Activated CD4-positive, alpha-beta T cell treated with anti-CD3 and anti-CD28 coated beads, Interleukin-2, amount 10 ng/mL, durations not matched to agents 24 days and 14 days (primary cell): ENCODE measurements at regions of chr18 and their contacts with region 1.

Region 1: DNA sequence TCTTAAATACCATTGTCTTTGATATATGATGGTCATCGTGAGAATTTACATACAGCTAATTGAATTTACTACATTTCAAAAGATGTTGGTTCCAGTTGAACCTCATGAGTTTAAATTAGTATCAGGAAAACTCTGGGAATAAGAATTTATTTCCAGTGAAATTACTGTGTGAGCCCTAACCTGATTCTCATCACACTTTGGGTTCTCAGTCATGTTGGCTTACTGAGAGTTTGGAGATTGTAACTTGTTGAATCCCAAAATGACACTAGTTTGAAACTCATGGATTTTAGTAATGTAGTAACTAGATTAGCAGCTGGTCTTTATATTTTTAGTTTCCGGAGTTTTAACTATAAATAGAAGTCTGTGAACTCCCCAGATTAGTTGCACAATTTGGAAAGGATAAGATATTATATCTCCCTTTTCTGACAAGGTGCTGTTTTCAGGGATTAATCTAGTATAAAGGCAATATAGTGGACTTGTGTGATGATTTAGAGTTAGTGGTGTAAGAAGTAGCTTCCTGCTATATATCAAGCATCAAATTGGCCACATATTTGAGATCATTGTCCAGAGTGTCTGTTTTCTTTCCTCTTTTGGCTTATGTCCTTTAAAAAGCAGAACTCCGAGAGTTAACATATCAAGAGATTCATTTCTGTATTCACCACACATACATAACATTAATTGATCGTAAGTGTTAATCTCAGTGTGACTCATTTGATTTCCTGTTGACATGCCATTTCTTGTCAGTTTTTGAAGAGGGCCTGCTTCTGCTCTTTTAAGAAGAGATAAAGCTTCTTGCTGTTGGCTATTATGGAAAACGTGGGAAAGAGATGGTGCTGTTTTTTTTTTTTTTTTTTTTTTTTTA is 15.7 kb downstream of the NDUFV2 start:
- DNase-seq: no peak
- H3K4me3 Mint-ChIP-seq: peak overlapping the region; percentile 81
- H3K27ac Mint-ChIP-seq: peak overlapping the region; percentile 99
- H3K4me1 Mint-ChIP-seq: peaks cover 60% of the 10 kb centered on the region
- H3K27me3 Mint-ChIP-seq: no peaks in the 10 kb centered on the region

Region 2: GRCh38 chr18:9082711-9083510 is 35.3 kb before region 1 on chr18:
- intact Hi-C with region 1: loop called (anchors 1 kb)
- DNase-seq: peak; percentile 86
- H3K4me3 Mint-ChIP-seq: peak overlapping the region; percentile 73
- H3K27ac Mint-ChIP-seq: peak overlapping the region; percentile 97
- H3K4me1 Mint-ChIP-seq: peaks cover 40% of the 10 kb centered on the region
- H3K27me3 Mint-ChIP-seq: no peaks in the 10 kb centered on the region

Region 3: DNA sequence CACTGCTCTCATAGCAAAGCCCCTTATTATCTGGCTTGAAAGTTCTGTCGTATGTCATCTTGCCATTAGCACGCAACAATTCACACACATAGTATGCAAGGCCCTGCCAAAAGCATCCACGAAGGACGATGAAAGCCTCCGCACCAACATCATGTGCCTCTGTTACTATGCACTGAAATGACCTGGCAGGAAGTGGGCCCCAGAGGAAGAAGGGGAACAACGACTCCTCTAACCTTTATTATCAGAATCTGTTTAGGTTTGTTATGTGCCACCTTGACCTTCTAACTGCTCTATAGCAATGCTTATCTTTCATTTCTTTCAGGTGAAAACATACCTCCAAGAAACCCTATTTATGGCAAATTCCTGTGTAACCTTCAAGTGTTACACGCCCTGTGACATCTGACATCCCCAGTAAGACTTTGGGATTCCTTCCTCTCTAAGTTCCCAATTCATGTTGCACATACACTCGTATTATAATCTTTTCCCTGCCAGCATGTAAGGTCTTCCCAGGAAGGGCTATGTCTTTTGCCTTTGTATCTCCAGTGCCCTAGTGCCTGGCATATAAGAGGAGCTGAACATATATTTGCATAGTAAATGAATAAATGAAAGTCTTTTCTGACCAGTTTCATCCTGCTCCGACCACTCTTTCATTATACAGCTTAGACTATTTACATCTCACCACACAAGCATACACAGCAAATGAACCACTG is 22.8 kb before region 1 on chr18:
- intact Hi-C with region 1: loop called (anchors 1 kb)
- DNase-seq: peak; percentile 89
- H3K4me3 Mint-ChIP-seq: peak overlapping the region; percentile 77
- H3K27ac Mint-ChIP-seq: peak overlapping the region; percentile 98
- H3K4me1 Mint-ChIP-seq: peaks cover 67% of the 10 kb centered on the region
- H3K27me3 Mint-ChIP-seq: no peaks in the 10 kb centered on the region

Region 4: DNA sequence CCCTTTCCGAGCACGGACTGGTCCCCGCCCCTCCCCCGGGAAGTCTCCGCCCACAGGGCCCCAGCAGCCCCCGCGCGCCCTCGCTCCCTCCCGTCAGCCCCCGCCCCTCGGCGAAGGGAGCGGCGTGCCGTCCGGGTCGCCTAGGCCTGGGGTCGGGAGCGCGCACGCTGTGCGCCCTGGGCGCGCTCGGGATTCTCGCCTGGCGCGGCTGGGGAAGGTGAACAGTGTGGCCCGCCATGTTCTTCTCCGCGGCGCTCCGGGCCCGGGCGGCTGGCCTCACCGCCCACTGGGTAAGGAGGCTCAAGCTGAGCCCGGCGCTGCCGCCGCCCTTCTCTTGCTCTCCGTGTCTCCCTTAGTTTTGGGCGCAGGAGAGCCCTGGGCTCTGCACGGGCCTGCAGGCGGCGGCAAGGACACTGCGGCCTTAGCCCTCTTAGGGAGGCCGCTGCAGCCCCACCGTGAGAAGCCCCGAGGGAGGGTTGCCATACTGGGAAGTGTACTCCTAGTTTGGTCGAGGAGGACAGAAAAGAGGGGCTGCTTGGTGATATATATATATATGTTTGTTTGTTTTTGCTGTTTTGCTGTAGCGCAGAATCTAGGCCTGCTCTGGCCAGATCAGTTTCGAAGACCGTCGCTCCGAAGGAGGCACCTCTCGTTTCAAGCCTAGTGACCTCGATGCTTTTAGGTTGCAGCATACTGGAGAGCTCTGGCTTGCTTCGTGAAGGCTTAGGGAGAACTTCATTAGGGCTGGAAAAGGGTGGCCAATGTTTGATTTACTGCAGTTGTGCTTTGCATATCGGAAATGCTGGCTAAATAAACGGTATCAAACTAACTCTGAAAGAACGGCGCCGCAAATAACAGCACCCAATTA is 15.5 kb before region 1 on chr18 and contains the start of gene NDUFV2:
- intact Hi-C with region 1: loop called (anchors 2 kb)
- DNase-seq: peak; percentile 100
- H3K4me3 Mint-ChIP-seq: peak within 1 kb of the TSS; percentile 95
- H3K27ac Mint-ChIP-seq: peak within 1 kb of the TSS; percentile 98
- H3K4me1 Mint-ChIP-seq: peaks cover 54% of the 10 kb centered on the region
- H3K27me3 Mint-ChIP-seq: no peaks in the 10 kb centered on the region
- total RNA-seq, gene NDUFV2: 357 and 360 TPM in 2 replicates

Region 5: GRCh38 chr18:9136315-9137155 is 18.3 kb after region 1 on chr18 and contains the start of gene ANKRD12:
- intact Hi-C with region 1: loop called (anchors 1 kb)
- DNase-seq: peak; percentile 100
- H3K4me3 Mint-ChIP-seq: peak within 1 kb of the TSS; percentile 94
- H3K27ac Mint-ChIP-seq: peak within 1 kb of the TSS; percentile 99
- H3K4me1 Mint-ChIP-seq: peaks cover 54% of the 10 kb centered on the region
- H3K27me3 Mint-ChIP-seq: no peaks in the 10 kb centered on the region
- total RNA-seq, gene ANKRD12: 60.8 TPM in 2 replicates

Region 6: GRCh38 chr18:9147440-9148202 is 29.4 kb after region 1 on chr18:
- intact Hi-C with region 1: loop called (anchors 1 kb)
- DNase-seq: peak; percentile 83
- H3K4me3 Mint-ChIP-seq: peak overlapping the region; percentile 66
- H3K27ac Mint-ChIP-seq: peak overlapping the region; percentile 78
- H3K4me1 Mint-ChIP-seq: peaks cover 50% of the 10 kb centered on the region
- H3K27me3 Mint-ChIP-seq: no peaks in the 10 kb centered on the region